ENCODE measurements at regions of chr2 and their contacts with region 1.

Region 1: GRCh38 chr2:112645310-112646101 is at the start of gene SLC20A1:
- DNase-seq: peak; percentile 93 to 100 (median 98)
- ATAC-seq: peak; percentile 89
- H3K4me3 ChIP-seq: peak within 1 kb of the TSS; percentile 81
- H3K4me3 Mint-ChIP-seq: peak within 1 kb of the TSS; percentile 93
- H3K27ac ChIP-seq: peak within 1 kb of the TSS; percentile 79 to 85
- H3K27ac Mint-ChIP-seq: peak within 1 kb of the TSS; percentile 85
- H3K4me1 ChIP-seq: peaks cover 47% of the 10 kb centered on the region
- H3K4me1 Mint-ChIP-seq: peaks cover 54% of the 10 kb centered on the region
- H3K27me3 ChIP-seq: no peaks in the 10 kb centered on the region
- H3K27me3 Mint-ChIP-seq: no peaks in the 10 kb centered on the region
- CTCF ChIP-seq: peak; percentile 10
- total RNA-seq, gene SLC20A1: 130 to 139 TPM

Region 2: GRCh38 chr2:112481050-112481527 is 164.4 kb before region 1 on chr2:
- CTCF ChIA-PET with region 1: no interaction called
- POLR2A ChIA-PET with region 1: interaction called, 4 read pairs
- intact Hi-C with region 1: loop called in 1 of 2 experiments (anchors 5 kb)
- DNase-seq: peak; percentile 72 to 91 (median 79)
- ATAC-seq: peak; percentile 81
- H3K4me3 ChIP-seq: peak overlapping the region; percentile 77
- H3K4me3 Mint-ChIP-seq: peak overlapping the region; percentile 93
- H3K27ac ChIP-seq: peak overlapping the region; percentile 48 to 75
- H3K27ac Mint-ChIP-seq: peak overlapping the region; percentile 85
- H3K4me1 ChIP-seq: peaks cover 28% of the 10 kb centered on the region
- H3K4me1 Mint-ChIP-seq: peaks cover 25% of the 10 kb centered on the region
- H3K27me3 ChIP-seq: no peaks in the 10 kb centered on the region
- H3K27me3 Mint-ChIP-seq: no peaks in the 10 kb centered on the region
- CTCF ChIP-seq: peak; percentile 84

Region 3: DNA sequence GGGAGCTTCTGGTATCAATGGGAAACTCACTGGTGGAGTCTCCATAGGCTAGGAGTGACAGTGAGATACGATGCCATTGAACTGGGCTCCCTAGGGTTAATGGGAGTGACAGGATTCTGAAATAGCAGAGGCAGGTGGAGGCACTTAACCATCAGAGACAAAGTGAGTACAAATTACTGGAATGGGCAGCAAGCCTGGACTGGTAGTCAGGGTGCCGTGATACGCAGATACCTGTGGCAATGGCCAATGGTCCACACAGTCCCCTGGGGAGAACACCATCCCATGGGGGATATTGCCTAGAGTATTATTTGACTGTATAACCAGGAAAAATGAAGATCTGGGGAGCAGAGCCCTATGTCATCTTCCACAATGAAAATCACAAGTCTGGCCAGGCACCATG is 43.8 kb before region 1 on chr2:
- CTCF ChIA-PET with region 1: interaction called, 18 read pairs
- POLR2A ChIA-PET with region 1: no interaction called
- intact Hi-C with region 1: no loop called
- DNase-seq: no peak
- ATAC-seq: no peak
- H3K4me3 ChIP-seq: no peak overlapping the region
- H3K4me3 Mint-ChIP-seq: no peak overlapping the region
- H3K27ac ChIP-seq: no peak overlapping the region
- H3K27ac Mint-ChIP-seq: no peak overlapping the region
- H3K4me1 ChIP-seq: peaks cover 4% of the 10 kb centered on the region
- H3K4me1 Mint-ChIP-seq: peaks cover 5% of the 10 kb centered on the region
- H3K27me3 ChIP-seq: no peaks in the 10 kb centered on the region
- H3K27me3 Mint-ChIP-seq: no peaks in the 10 kb centered on the region
- CTCF ChIP-seq: no peak

Region 4: GRCh38 chr2:112634153-112634873 is 11.2 kb before region 1 on chr2:
- CTCF ChIA-PET with region 1: interaction called, 28 read pairs
- POLR2A ChIA-PET with region 1: interaction called, 239 read pairs
- intact Hi-C with region 1: loop called in 1 of 2 experiments (anchors 1 kb)
- DNase-seq: peak in 6 of 14 experiments; percentile 11 to 70 (median 54)
- ATAC-seq: peak; percentile 21
- H3K4me3 ChIP-seq: no peak overlapping the region
- H3K4me3 Mint-ChIP-seq: peak overlapping the region; percentile 50
- H3K27ac ChIP-seq: peak overlapping the region in 1 of 2 donors; percentile 47
- H3K27ac Mint-ChIP-seq: peak overlapping the region; percentile 71
- H3K4me1 ChIP-seq: peaks cover 78% of the 10 kb centered on the region
- H3K4me1 Mint-ChIP-seq: peaks cover 71% of the 10 kb centered on the region
- H3K27me3 ChIP-seq: no peaks in the 10 kb centered on the region
- H3K27me3 Mint-ChIP-seq: no peaks in the 10 kb centered on the region
- CTCF ChIP-seq: no peak

Region 5: GRCh38 chr2:112692496-112692911 is 47.0 kb after region 1 on chr2:
- CTCF ChIA-PET with region 1: interaction called, 10 read pairs
- POLR2A ChIA-PET with region 1: interaction called, 6 read pairs
- intact Hi-C with region 1: loop called in 1 of 2 experiments (anchors 5 kb)
- DNase-seq: peak in 12 of 14 experiments; percentile 12 to 85 (median 35)
- ATAC-seq: peak; percentile 69
- H3K4me3 ChIP-seq: no peak overlapping the region
- H3K4me3 Mint-ChIP-seq: peak overlapping the region; percentile 14
- H3K27ac ChIP-seq: peak overlapping the region in 1 of 2 donors; percentile 48
- H3K27ac Mint-ChIP-seq: peak overlapping the region; percentile 51
- H3K4me1 ChIP-seq: peaks cover 31% of the 10 kb centered on the region
- H3K4me1 Mint-ChIP-seq: peaks cover 22% of the 10 kb centered on the region
- H3K27me3 ChIP-seq: peaks cover 0 to 3% of the 10 kb centered on the region in 2 experiments
- H3K27me3 Mint-ChIP-seq: no peaks in the 10 kb centered on the region
- CTCF ChIP-seq: no peak

Region 6: DNA sequence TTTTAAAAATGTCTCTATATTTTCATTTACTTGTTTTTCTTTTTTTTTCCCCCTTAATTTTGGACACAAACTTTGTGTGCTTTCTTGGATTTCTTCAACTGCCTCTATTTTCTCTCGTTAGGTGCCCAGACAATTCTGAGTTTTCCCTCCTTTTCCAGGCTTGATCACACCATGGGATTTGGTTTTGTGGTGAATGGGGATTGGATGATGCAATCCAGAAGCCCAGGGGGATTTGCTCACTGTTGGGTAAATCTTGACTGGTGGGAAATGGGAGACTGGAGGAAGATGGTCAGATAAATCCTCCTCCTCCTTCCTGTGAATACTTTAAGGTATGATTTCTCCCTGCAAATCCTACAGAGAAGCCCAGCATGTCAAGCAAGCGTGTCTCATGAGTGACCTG is 652.7 kb after region 1 on chr2:
- CTCF ChIA-PET with region 1: no interaction called
- POLR2A ChIA-PET with region 1: no interaction called
- intact Hi-C with region 1: no loop called
- DNase-seq: no peak
- ATAC-seq: no peak
- H3K4me3 ChIP-seq: no peak overlapping the region
- H3K4me3 Mint-ChIP-seq: no peak overlapping the region
- H3K27ac ChIP-seq: no peak overlapping the region
- H3K27ac Mint-ChIP-seq: no peak overlapping the region
- H3K4me1 ChIP-seq: no peaks in the 10 kb centered on the region
- H3K4me1 Mint-ChIP-seq: no peaks in the 10 kb centered on the region
- H3K27me3 ChIP-seq: no peaks in the 10 kb centered on the region
- H3K27me3 Mint-ChIP-seq: no peaks in the 10 kb centered on the region
- CTCF ChIP-seq: no peak